ENCODE measurements at regions of chr2 and their contacts with region 1.

Region 1: DNA sequence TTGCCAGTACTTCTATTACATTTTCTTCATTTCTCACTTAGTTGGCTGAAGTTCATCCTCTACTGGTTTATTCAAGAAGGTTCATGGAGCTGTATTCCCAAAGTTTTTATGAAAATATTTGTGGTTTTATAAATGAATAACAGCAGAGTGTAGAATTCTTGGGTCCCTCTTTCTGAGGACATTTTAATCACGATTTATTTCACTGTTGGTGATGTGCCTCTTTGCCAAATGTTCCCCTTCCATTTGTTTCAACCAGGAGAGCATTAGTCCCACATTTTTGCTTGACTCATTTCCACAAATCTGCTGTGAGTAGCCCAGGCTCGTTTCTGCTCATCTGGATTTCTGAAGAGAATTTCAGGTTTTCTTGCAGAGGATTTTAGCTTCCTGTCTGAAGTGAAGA is 20.8 kb downstream of the COPS7B start:
- DNase-seq: no peak
- ATAC-seq: no peak
- H3K4me3 ChIP-seq: no peak overlapping the region
- H3K27ac ChIP-seq: no peak overlapping the region
- H3K4me1 ChIP-seq: no peaks in the 10 kb centered on the region
- H3K27me3 ChIP-seq: no peaks in the 10 kb centered on the region
- CTCF ChIP-seq: no peak
- EP300 ChIP-seq: no peak
- POLR2A ChIP-seq: no peak
- RAD21 ChIP-seq: no peak

Region 2: GRCh38 chr2:231866450-231866849 is 59.4 kb after region 1 on chr2:
- CTCF ChIA-PET with region 1: no interaction called
- POLR2A ChIA-PET with region 1: no interaction called
- RAD21 ChIA-PET with region 1: no interaction called
- SMC1A ChIA-PET with region 1: no interaction called
- in situ Hi-C with region 1: loop called (anchors 5 kb)
- intact Hi-C with region 1: no loop called
- DNase-seq: no peak
- ATAC-seq: no peak
- H3K4me3 ChIP-seq: no peak overlapping the region
- H3K27ac ChIP-seq: no peak overlapping the region
- H3K4me1 ChIP-seq: no peaks in the 10 kb centered on the region
- H3K27me3 ChIP-seq: no peaks in the 10 kb centered on the region
- CTCF ChIP-seq: no peak
- EP300 ChIP-seq: no peak
- POLR2A ChIP-seq: no peak
- RAD21 ChIP-seq: no peak